PC-3 (cell line): ENCODE measurements at regions of chr17 and their contacts with region 1.

Region 1: DNA sequence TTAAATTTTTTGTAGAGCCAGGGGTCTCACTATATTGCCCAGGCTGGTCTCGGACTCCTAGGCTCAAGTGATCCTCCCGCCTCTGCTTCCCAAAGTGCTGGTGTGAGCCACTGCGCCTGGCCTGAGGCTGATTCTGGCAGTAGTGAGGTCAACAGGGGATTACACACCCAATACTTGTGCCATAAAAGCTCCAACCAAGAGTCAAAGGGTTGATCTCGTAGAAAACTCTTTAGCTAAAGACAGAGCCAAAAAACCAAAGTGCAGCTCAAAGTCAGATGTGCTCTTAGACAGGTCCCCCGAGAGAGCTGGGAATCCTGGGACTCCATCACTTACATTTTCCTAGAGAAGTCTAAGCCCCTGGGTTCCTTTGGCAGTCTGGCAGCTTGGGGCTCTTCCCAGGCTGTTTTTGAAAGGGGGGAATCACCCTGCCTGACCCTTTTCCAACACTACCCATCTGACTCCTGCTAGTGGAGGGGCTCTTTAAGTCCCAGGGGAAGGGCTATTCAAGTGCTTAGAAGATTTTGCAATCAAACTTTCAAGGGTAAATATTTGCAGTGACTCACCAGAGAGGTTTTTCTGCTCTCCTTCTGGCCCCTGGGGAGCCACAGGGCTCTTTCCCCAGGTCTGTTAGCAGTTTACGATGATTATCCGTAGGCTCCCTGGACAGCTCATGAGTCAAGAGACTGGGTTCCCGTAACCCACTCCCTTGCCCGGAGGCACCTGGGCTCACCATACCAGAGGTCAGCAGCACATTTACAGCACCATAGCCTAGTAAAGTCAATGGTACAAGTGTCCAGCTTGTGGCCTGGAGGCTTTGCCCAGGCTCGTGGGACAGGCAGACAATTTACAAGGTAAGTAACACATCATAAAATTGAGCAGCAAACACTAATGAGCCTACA is 408.7 kb downstream of the SLC39A11 start:
- DNase-seq: peak; percentile 100
- ATAC-seq: peak; percentile 95
- H3K4me3 ChIP-seq: peak overlapping the region; percentile 38; the same call in 1 of the 2 replicates
- H3K27ac ChIP-seq: peak overlapping the region; percentile 97
- H3K4me1 ChIP-seq: peaks cover 44% of the 10 kb centered on the region
- H3K27me3 ChIP-seq: no peaks in the 10 kb centered on the region
- CTCF ChIP-seq: no peak

Region 2: DNA sequence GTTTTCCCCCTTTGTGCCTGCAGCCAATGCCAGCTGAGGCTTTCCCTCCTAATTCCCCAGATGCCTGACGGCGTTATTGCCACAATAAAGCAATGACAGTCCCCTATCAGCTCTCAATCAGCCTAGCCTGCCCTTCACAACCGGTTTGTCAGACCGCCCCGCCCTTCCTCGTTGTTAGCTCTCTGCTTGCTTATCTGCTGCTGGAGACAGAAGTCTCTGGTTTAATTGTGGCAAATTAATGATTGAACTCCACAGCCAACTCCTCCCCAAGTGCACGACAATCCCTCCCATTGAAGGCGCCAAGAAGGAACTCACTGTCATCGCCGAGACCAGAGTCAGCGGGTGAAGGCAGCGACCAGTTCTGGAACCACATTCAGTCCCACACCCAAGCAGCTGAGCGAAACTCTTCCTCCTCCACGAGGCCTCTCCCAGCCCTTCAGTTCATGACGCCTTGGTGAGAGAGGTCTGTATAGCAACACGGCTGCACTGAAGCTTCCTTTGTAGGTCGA is 65.7 kb before region 1 on chr17:
- CTCF ChIA-PET with region 1: no interaction called
- POLR2A ChIA-PET with region 1: no interaction called
- intact Hi-C with region 1: loop called (anchors 2 kb)
- DNase-seq: peak; percentile 76
- ATAC-seq: peak; percentile 19
- H3K4me3 ChIP-seq: peak overlapping the region; percentile 27; the same call in 1 of the 2 replicates
- H3K27ac ChIP-seq: peak overlapping the region; percentile 51
- H3K4me1 ChIP-seq: peaks cover 44% of the 10 kb centered on the region
- H3K27me3 ChIP-seq: no peaks in the 10 kb centered on the region
- CTCF ChIP-seq: no peak

Region 3: GRCh38 chr17:72631949-72632684 is 51.6 kb before region 1 on chr17:
- CTCF ChIA-PET with region 1: no interaction called
- POLR2A ChIA-PET with region 1: interaction called, 5 read pairs
- intact Hi-C with region 1: loop called (anchors 5 kb)
- DNase-seq: peak; percentile 85
- ATAC-seq: peak; percentile 80
- H3K4me3 ChIP-seq: peak overlapping the region; percentile 44
- H3K27ac ChIP-seq: peak overlapping the region; percentile 91
- H3K4me1 ChIP-seq: peaks cover 31% of the 10 kb centered on the region
- H3K27me3 ChIP-seq: no peaks in the 10 kb centered on the region
- CTCF ChIP-seq: no peak

Region 4: GRCh38 chr17:72699545-72699944 is 15.8 kb after region 1 on chr17:
- CTCF ChIA-PET with region 1: no interaction called
- POLR2A ChIA-PET with region 1: no interaction called
- intact Hi-C with region 1: loop called (anchors 1 kb)
- DNase-seq: peak; percentile 92
- ATAC-seq: peak; percentile 91
- H3K4me3 ChIP-seq: no peak overlapping the region
- H3K27ac ChIP-seq: peak overlapping the region; percentile 91
- H3K4me1 ChIP-seq: peaks cover 55% of the 10 kb centered on the region
- H3K27me3 ChIP-seq: no peaks in the 10 kb centered on the region
- CTCF ChIP-seq: no peak

Region 5: GRCh38 chr17:72715906-72716572 is 32.3 kb after region 1 on chr17:
- CTCF ChIA-PET with region 1: interaction called, 3 read pairs
- POLR2A ChIA-PET with region 1: interaction called, 9 read pairs
- intact Hi-C with region 1: loop called (anchors 1 kb)
- DNase-seq: peak; percentile 99
- ATAC-seq: peak; percentile 95
- H3K4me3 ChIP-seq: no peak overlapping the region
- H3K27ac ChIP-seq: peak overlapping the region; percentile 95
- H3K4me1 ChIP-seq: peaks cover 36% of the 10 kb centered on the region
- H3K27me3 ChIP-seq: no peaks in the 10 kb centered on the region
- CTCF ChIP-seq: no peak